A673 (cell line): ENCODE measurements at regions of chr11 and their contacts with region 1.

Region 1: DNA sequence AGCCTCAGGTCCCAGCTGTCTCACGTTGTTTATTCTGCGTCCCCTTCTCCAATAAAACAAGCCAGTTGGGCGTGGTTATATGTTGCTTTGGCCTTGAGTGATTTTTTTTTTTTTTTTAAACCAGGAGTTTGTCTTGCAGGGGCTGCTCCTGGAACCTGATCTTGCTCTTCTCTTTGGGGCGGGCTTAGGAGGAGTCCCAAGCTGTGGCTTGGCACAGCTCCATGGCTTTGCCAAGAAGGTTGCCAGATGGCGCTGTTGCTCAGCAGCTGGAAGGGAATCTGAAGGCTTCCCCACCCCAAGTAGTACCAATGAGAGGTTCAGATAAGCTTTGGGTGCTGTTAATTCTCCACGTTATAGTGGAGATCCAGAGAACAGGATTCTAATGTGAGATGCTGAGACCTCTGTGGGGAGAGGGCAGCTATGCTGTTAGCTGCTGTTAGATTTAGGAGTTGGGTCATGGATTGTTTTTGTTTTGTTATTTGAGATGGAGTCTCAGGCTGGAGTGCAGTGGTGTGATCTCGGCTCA is 2.0 kb upstream of the FERMT3 start:
- DNase-seq: peak; percentile 100
- H3K4me3 ChIP-seq: no peak overlapping the region
- H3K27ac ChIP-seq: peak overlapping the region; percentile 93
- H3K4me1 ChIP-seq: peaks cover 59% of the 10 kb centered on the region
- H3K27me3 ChIP-seq: no peaks in the 10 kb centered on the region
- CTCF ChIP-seq: peak; percentile 98

Region 2: DNA sequence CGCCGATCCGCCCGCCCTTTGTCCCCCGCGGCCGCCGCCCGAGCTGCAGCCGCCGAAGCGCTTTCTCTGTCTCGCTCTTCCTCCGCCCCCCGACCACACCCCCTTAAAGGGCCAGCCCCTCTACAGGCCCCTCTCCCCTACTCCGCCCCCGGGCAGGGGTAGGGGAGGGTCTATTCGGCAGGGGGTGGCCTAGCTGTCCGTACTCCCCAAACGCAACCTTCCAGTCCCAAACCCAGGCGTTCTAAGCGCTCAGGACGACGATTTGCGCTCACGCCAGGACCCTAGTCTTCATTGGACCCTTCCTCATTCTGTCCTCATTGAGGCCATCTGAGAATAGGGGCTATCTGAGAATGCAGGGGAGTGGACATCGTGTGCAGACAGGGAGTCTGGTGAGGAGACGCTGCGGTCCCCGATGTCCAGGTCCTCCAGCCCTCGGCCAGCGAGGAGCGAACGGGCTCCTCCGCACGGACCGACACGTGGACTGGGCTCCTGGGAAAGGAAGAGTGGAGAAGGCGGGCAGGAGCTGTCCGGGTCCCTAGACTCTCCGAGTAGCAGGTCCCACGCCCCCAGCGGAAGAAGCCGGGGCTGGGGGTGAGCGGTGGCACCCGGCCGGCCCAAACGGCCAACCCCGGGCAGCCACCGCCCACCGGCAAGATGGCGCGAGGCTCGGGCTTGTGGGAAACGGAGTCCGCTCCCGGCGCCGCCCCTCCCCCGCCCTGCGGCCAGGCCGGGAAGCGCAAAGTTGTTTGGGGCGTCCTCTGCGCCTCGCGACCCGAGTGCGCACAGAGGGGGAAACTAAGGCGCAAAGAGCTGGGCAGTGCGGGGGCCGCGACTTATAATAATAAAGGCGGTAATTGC is 42.6 kb after region 1 on chr11 and contains the start of gene PPP1R14B:
- CTCF ChIA-PET with region 1: interaction called, 11 read pairs
- POLR2A ChIA-PET with region 1: no interaction called
- intact Hi-C with region 1: loop called (anchors 5 kb)
- DNase-seq: peak; percentile 95
- H3K4me3 ChIP-seq: peak within 1 kb of the TSS; percentile 99
- H3K27ac ChIP-seq: peak within 1 kb of the TSS; percentile 92
- H3K4me1 ChIP-seq: peaks cover 32% of the 10 kb centered on the region
- H3K27me3 ChIP-seq: no peaks in the 10 kb centered on the region
- CTCF ChIP-seq: no peak
- total RNA-seq, gene PPP1R14B: 378 and 402 TPM in 2 replicates

Region 3: DNA sequence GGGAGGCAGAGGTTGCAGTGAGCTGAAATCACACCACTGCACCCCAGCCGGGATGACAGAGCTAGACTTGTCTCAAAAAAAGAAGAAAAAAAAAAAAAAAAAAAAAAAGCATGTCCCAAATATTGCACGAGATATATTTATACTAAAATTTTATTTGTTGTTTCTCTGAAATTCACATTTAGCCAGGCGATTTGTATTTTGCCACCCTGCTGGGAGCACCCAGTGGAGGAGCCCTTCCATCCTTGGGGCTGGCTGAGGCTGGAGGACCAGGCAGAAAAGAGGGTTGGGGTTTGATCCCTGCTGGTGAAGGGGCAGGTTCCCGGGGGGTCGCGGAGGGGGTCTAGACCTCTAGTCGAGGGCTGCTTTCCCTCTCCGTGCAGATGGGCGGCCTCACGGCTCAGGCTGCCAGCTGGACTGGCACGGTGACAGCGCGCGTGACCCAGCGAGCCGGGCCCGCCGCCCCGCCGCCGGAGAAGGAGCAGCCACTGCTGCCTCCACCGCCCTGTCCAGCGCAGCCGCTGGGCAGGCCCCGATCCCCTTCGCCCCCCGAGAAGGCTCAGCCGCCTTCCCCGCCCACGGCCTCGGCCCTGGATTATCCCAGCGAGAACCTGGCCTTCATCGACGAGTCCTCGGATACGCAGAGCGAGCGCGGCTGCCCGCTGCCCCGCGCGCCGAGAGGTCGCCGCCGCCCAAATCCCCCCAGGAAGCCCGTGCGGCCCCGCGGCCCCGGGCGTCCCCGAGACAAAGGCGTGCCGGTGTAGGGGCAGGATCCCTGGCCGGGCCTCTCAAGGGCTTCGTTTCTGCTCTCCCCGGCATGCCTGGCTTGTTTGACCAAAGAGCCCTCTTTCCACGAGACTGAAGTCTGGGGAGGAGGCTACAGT is 94.7 kb after region 1 on chr11:
- CTCF ChIA-PET with region 1: interaction called, 33 read pairs
- POLR2A ChIA-PET with region 1: no interaction called
- intact Hi-C with region 1: loop called (anchors 1 kb)
- DNase-seq: no peak
- H3K4me3 ChIP-seq: peak overlapping the region; percentile 38
- H3K27ac ChIP-seq: no peak overlapping the region
- H3K4me1 ChIP-seq: peaks cover 22% of the 10 kb centered on the region
- H3K27me3 ChIP-seq: peaks cover 13% of the 10 kb centered on the region
- CTCF ChIP-seq: no peak